Caco-2 (cell line): ENCODE measurements at regions of chr20 and their contacts with region 1.

Region 1: GRCh38 chr20:35994994-35995453 is 26.6 kb downstream of the CNBD2 start:
- DNase-seq: peak; percentile 97 to 98
- H3K4me3 ChIP-seq: no peak overlapping the region
- H3K4me3 Mint-ChIP-seq: no peak overlapping the region
- H3K27ac Mint-ChIP-seq: no peak overlapping the region
- H3K4me1 ChIP-seq: 0 out of 2 replicates have a peak, but pooled peaks cover 3% of the 10 kb centered on the region
- H3K4me1 Mint-ChIP-seq: no peaks in the 10 kb centered on the region
- H3K27me3 ChIP-seq: no peaks in the 10 kb centered on the region
- H3K27me3 Mint-ChIP-seq: no peaks in the 10 kb centered on the region
- CTCF ChIP-seq: peak; percentile 100

Region 2: GRCh38 chr20:35978041-35978513 is 16.9 kb before region 1 on chr20:
- CTCF ChIA-PET with region 1: interaction called, 81 read pairs
- POLR2A ChIA-PET with region 1: no interaction called
- intact Hi-C with region 1: no loop called
- DNase-seq: no peak
- H3K4me3 ChIP-seq: no peak overlapping the region
- H3K4me3 Mint-ChIP-seq: no peak overlapping the region
- H3K27ac Mint-ChIP-seq: no peak overlapping the region
- H3K4me1 ChIP-seq: no peaks in the 10 kb centered on the region
- H3K4me1 Mint-ChIP-seq: no peaks in the 10 kb centered on the region
- H3K27me3 ChIP-seq: 0 out of 2 replicates have a peak, but pooled peaks cover 1% of the 10 kb centered on the region
- H3K27me3 Mint-ChIP-seq: no peaks in the 10 kb centered on the region
- CTCF ChIP-seq: no peak

Region 3: DNA sequence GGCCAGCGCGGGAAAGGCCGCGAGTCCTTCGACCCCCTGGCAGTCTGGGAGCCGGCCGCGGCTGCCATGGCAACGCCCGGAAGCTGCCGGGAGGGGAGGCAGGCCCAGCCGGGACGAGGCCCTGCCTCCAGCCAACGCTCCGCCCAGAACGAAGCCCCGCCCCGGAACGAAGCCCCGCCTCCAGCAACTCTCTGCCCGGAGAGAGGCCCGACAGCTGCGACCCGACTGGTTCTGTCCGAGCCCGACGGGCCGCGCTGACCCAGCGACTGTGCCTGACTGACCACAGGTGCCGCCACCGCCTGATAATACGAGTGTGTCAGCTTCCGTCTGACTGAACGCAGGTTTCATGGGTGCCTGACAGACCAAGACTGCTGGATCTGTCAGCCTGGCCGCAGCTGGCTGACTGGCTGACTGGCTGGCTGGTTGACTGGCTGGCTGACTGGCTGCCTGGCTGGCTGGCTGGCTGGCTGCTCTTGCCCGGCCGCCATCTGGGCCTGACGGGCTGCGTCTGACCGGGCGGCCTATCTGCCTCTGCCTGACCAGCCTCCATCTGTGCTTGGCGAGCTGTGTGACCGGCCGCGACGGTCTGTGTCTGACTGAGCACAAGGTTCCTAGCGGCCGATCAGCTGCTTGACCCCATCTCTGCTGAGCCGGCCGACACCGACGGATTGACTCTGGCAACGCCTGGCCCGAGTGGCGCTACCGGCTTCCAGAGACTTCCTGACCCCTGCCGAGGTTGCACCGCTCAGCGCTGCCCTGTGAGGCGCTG is 69.8 kb after region 1 on chr20:
- CTCF ChIA-PET with region 1: interaction called, 9 read pairs
- POLR2A ChIA-PET with region 1: interaction called, 3 read pairs
- intact Hi-C with region 1: loop called (anchors 1 kb)
- DNase-seq: peak; percentile 97 to 100
- H3K4me3 ChIP-seq: peak overlapping the region; percentile 54
- H3K4me3 Mint-ChIP-seq: peak overlapping the region; percentile 81
- H3K27ac Mint-ChIP-seq: peak overlapping the region; percentile 75
- H3K4me1 ChIP-seq: peaks cover 28% of the 10 kb centered on the region
- H3K4me1 Mint-ChIP-seq: peaks cover 10% of the 10 kb centered on the region
- H3K27me3 ChIP-seq: no peaks in the 10 kb centered on the region
- H3K27me3 Mint-ChIP-seq: no peaks in the 10 kb centered on the region
- CTCF ChIP-seq: peak in 1 of 2 experiments; percentile 13

Region 4: GRCh38 chr20:36098364-36098763 is 103.3 kb after region 1 on chr20:
- CTCF ChIA-PET with region 1: interaction called, 36 read pairs
- POLR2A ChIA-PET with region 1: interaction called, 3 read pairs
- intact Hi-C with region 1: no loop called
- DNase-seq: no peak
- H3K4me3 ChIP-seq: no peak overlapping the region
- H3K4me3 Mint-ChIP-seq: no peak overlapping the region
- H3K27ac Mint-ChIP-seq: no peak overlapping the region
- H3K4me1 ChIP-seq: peaks cover 66% of the 10 kb centered on the region
- H3K4me1 Mint-ChIP-seq: peaks cover 37% of the 10 kb centered on the region
- H3K27me3 ChIP-seq: no peaks in the 10 kb centered on the region
- H3K27me3 Mint-ChIP-seq: no peaks in the 10 kb centered on the region
- CTCF ChIP-seq: no peak

Region 5: GRCh38 chr20:36154700-36155628 is 159.9 kb after region 1 on chr20 and contains the start of gene EPB41L1:
- CTCF ChIA-PET with region 1: interaction called, 785 read pairs
- POLR2A ChIA-PET with region 1: no interaction called
- intact Hi-C with region 1: no loop called
- DNase-seq: no peak
- H3K4me3 ChIP-seq: no peak within 1 kb of the TSS
- H3K4me3 Mint-ChIP-seq: no peak within 1 kb of the TSS
- H3K27ac Mint-ChIP-seq: no peak within 1 kb of the TSS
- H3K4me1 ChIP-seq: peaks cover 14% of the 10 kb centered on the region
- H3K4me1 Mint-ChIP-seq: no peaks in the 10 kb centered on the region
- H3K27me3 ChIP-seq: no peaks in the 10 kb centered on the region
- H3K27me3 Mint-ChIP-seq: no peaks in the 10 kb centered on the region
- CTCF ChIP-seq: no peak
- total RNA-seq, gene EPB41L1: 129 and 137 TPM in 2 replicates